ENCODE measurements at regions of chr5 and their contacts with region 1.

Region 1: DNA sequence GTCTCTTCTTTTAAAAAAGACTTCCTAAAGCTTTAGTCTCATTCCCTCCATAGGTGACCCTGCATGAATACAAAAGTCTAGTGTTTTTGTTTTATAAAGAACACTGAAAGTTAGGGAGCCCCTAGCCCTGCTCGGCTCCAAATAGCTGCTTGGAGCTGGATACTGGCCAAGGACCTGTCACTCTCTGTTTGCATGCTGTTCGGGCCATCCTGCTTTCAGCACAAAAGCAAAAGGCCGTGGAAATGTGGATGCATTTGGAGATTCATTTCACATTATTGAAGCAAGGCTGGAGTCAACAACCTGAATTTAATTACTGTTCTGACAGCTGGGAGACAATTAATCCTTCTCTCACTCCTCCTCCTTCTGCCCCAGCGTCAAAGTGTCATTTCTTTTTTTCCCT is 151.7 kb upstream of the NMUR2 start:
- DNase-seq: no peak
- H3K4me3 ChIP-seq: no peak overlapping the region
- H3K27ac ChIP-seq: no peak overlapping the region
- H3K4me1 ChIP-seq: no peaks in the 10 kb centered on the region
- H3K27me3 ChIP-seq: no peaks in the 10 kb centered on the region
- CTCF ChIP-seq: no peak
- EP300 ChIP-seq: no peak
- POLR2A ChIP-seq: no peak

Region 2: DNA sequence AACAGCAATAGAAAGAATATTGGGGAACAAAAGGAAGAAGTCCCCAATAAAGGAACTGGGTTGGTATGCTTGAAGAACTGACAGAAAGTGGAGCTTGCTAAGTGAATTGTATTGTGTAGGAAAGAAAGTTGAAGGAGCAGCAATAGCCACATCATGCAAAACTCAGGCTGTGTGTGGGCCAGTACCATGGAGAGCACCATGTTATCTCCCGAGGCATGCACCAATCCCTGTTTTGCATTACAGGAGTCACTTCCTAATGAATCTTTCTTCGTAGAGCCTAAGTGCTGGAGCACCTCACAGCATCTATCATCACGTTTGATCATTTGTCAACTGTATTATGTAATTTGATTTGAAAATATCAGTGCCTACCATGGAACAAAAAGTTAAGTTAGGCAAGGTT is 14.0 kb before region 1 on chr5:
- intact Hi-C with region 1: no loop called
- DNase-seq: no peak
- H3K4me3 ChIP-seq: no peak overlapping the region
- H3K27ac ChIP-seq: no peak overlapping the region
- H3K4me1 ChIP-seq: no peaks in the 10 kb centered on the region
- H3K27me3 ChIP-seq: no peaks in the 10 kb centered on the region
- CTCF ChIP-seq: no peak
- EP300 ChIP-seq: no peak
- POLR2A ChIP-seq: no peak

Region 3: DNA sequence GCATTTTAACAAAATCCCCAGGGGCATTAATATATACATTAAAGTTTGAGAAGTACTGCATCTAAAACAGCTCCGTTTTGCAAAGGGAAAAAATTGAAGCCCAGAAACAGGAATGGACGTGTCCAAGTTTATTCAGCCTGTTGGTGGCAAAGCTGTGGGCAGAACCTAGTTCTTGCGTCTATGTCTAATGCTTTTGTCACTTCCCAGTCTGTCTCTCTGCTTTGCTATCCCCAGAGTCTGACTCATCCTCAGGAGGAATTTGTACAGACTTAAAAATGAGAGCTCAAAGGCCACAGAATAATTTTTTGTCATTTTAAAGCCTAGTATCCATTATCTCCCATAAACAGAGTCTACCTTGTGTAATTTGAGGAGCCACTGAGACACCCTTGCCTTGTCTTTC is 602.8 kb after region 1 on chr5:
- intact Hi-C with region 1: loop called in 1 of 4 experiments (anchors 10 kb)
- DNase-seq: no peak
- H3K4me3 ChIP-seq: no peak overlapping the region
- H3K27ac ChIP-seq: no peak overlapping the region
- H3K4me1 ChIP-seq: no peaks in the 10 kb centered on the region
- H3K27me3 ChIP-seq: no peaks in the 10 kb centered on the region
- CTCF ChIP-seq: no peak
- EP300 ChIP-seq: no peak
- POLR2A ChIP-seq: no peak

Measured in ovary (tissue), 10 donors.